ENCODE measurements at regions of chr20 and their contacts with region 1.

Region 1: DNA sequence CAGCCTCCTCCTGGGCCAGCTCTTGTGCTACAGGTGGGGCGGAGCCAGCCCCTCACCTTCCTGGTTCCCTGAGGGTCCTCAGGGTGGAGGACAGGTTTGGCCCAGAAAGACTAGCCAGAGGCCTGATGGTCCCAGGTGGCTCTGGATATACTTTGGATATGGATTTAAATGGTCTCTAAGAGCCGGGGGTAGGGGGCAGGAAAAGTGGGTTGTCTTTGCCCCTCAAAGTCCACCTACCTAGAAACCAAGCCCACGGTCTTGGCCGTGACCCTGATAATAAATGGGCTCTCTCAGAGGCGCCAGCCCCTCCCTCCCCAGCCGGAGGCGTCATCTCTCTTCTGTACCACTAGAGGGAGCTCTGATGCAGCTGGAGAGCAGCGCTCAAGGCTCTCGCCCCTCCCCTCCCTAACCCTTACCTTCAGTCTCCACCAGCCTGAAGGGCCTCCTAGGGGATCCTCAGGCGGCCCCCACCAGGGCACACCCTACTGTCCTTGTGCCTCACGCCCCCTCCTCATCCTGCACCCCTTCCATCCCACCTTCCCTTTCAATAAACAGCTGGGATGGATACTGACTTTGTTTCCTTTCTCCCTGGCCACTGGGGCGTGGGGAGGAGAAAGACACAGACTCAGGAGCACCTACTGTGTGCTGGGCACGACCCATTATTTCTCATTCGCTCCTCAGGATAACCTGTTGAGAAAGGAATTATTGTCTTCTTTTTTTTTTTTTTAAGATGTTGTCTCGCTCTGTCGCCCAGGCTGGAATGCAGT is 7.6 kb downstream of the NRSN2 start:
- DNase-seq: peak; percentile 67
- ATAC-seq: peak; percentile 97
- H3K4me3 ChIP-seq: no peak overlapping the region
- H3K27ac ChIP-seq: no peak overlapping the region
- H3K4me1 ChIP-seq: peaks cover 4% of the 10 kb centered on the region; the same call in 1 of the 2 replicates
- H3K27me3 ChIP-seq: no peaks in the 10 kb centered on the region
- CTCF ChIP-seq: peak; percentile 97
- POLR2A ChIP-seq: peak; percentile 56; the same call in 1 of the 2 replicates
- RAD21 ChIP-seq: peak; percentile 99

Region 2: GRCh38 chr20:478949-479429 is 124.5 kb after region 1 on chr20:
- CTCF ChIA-PET with region 1: interaction called, 4 read pairs
- POLR2A ChIA-PET with region 1: no interaction called
- dilution Hi-C with region 1: no loop called
- in situ Hi-C with region 1: loop called (anchors 5 kb)
- intact Hi-C with region 1: loop called (anchors 1 kb)
- DNase-seq: peak; percentile 77
- ATAC-seq: peak; percentile 69
- H3K4me3 ChIP-seq: no peak overlapping the region
- H3K27ac ChIP-seq: no peak overlapping the region
- H3K4me1 ChIP-seq: peaks cover 10% of the 10 kb centered on the region
- H3K27me3 ChIP-seq: no peaks in the 10 kb centered on the region
- CTCF ChIP-seq: peak; percentile 60
- POLR2A ChIP-seq: no peak
- RAD21 ChIP-seq: peak; percentile 55

Region 3: DNA sequence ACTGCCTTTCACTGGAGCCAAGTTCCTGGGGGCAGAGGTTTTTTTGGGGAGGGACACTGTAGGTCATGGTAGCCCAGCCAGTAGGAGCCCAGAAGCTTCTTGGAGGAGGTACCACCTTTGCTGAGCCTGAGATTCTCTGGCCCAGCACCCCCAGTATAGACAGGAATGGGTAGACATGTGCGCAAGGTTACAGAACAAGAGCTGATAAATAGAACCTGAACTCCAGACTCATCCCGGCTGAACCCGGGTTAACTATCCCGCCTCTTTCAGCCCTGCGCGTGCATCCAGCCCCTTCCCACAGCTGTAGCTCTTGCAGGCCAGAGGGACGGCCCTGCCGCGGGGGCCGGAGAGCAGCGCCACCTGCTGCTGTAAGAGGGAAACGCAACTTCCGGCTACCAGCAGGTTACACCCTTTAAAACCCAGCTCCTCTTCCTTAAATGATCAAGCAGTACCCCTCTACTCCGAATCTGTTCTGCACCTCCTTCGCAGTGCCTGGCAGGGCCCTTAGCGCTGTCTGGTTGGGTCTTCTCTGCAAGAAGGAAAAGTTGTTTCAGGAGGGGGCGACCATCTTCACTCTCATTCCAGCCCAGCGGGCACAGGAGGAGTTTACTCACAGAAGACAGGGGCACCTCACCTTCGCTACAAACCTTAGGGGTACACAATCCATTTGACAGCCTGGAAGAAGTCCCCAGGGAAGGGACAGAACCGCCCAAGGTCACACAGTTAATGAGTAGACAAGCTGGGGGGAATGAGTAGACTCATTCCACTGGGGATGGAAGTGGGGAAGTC is 291.0 kb after region 1 on chr20:
- CTCF ChIA-PET with region 1: interaction called, 4 read pairs
- POLR2A ChIA-PET with region 1: no interaction called
- dilution Hi-C with region 1: no loop called
- in situ Hi-C with region 1: loop called (anchors 10 kb)
- intact Hi-C with region 1: loop called (anchors 1 kb)
- DNase-seq: peak; percentile 57
- ATAC-seq: peak; percentile 87
- H3K4me3 ChIP-seq: no peak overlapping the region
- H3K27ac ChIP-seq: no peak overlapping the region
- H3K4me1 ChIP-seq: no peaks in the 10 kb centered on the region
- H3K27me3 ChIP-seq: no peaks in the 10 kb centered on the region; the same call in 1 of the 2 replicates
- CTCF ChIP-seq: peak; percentile 89
- POLR2A ChIP-seq: no peak
- RAD21 ChIP-seq: peak; percentile 77

Region 4: DNA sequence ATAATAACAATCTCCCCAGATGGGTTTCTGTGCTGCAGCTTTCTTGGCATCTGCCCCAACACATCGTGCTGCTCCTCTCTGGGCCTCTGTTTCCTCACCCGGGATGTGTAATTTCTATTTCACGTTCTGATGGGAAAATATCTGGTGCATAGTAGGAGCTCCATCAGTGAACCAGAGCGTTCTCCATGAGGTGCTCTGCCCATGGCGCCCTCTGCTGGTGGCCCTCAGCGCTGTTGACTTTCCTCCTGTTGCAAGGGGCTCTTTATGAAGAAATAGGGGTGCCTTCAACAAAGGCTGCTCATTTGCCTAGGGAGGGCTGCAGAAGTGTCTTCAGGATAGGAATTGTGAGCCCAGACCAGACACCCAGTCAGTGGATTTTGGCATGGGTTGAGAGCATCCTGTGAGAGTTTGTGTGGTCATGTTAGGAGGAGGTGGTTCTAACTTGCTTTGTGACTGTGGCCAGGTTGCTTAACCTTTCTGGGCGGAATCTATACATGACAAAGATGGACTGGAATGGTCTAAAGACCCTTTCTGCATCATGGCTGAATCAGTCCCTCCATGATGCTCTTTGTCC is 313.0 kb after region 1 on chr20:
- CTCF ChIA-PET with region 1: interaction called, 5 read pairs
- POLR2A ChIA-PET with region 1: no interaction called
- dilution Hi-C with region 1: no loop called
- in situ Hi-C with region 1: no loop called
- intact Hi-C with region 1: loop called (anchors 2 kb)
- DNase-seq: peak; percentile 34
- ATAC-seq: peak; percentile 68
- H3K4me3 ChIP-seq: no peak overlapping the region
- H3K27ac ChIP-seq: no peak overlapping the region
- H3K4me1 ChIP-seq: no peaks in the 10 kb centered on the region
- H3K27me3 ChIP-seq: peaks cover 86% of the 10 kb centered on the region
- CTCF ChIP-seq: peak; percentile 70
- POLR2A ChIP-seq: no peak
- RAD21 ChIP-seq: peak; percentile 56

Region 5: DNA sequence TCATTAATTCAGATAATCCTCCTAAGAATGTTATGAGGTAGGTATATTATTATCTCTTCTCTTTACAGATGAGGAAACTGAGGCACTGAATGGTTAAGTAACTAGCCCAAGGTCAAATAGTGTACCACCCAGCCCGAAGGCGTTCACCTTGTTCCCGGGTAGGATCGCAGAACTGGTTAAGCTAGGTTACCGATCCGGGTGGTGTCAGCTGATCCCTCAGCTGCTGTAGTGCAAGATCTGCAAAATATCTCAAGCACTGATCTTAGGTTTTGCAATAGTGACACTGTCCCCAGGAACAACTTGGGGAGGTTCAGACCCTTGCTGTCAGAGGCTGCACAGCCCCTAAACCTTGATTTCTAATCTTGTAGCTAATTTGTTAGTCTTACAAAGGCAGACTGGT is 385.7 kb after region 1 on chr20:
- CTCF ChIA-PET with region 1: no interaction called
- POLR2A ChIA-PET with region 1: no interaction called
- dilution Hi-C with region 1: no loop called
- in situ Hi-C with region 1: loop called (anchors 10 kb)
- intact Hi-C with region 1: loop called (anchors 2 kb)
- DNase-seq: no peak
- ATAC-seq: no peak
- H3K4me3 ChIP-seq: no peak overlapping the region
- H3K27ac ChIP-seq: no peak overlapping the region
- H3K4me1 ChIP-seq: no peaks in the 10 kb centered on the region
- H3K27me3 ChIP-seq: peaks cover 10% of the 10 kb centered on the region
- CTCF ChIP-seq: no peak
- POLR2A ChIP-seq: no peak
- RAD21 ChIP-seq: no peak

Region 6: DNA sequence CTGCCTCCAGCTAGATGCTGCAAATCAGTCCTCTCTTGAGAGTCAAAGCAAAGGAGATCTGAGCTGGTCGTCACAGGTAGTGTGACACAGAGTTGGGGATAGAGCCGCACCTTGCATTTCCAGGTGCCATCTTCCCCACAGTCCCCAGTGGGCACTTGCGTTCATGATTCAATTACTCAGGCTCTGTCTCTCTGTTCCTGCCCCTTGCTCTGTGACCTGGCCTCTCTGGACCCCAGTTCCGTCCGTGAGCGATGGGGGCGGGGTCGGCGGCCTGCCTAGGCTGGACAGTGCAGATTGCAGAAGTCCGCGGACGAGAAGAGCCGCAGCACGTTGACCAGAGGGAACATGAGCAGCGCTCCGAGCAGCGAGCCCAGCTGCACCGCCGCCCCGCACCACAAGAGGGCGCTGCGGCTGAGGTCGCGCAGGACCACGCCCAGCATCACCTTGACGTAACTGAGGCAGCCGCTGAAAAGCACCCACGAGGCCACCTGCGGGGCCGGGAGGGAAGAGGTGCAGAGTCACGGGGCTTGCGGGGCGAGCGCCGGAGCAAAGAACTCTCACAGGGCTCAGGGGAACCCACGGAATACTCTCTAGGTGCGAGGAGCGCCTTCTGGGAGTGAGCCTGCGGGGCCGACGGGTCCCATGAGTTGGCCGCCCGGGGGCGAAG is 406.4 kb after region 1 on chr20:
- CTCF ChIA-PET with region 1: no interaction called
- POLR2A ChIA-PET with region 1: no interaction called
- dilution Hi-C with region 1: no loop called
- in situ Hi-C with region 1: no loop called
- intact Hi-C with region 1: no loop called
- DNase-seq: no peak
- ATAC-seq: peak; percentile 62
- H3K4me3 ChIP-seq: no peak overlapping the region
- H3K27ac ChIP-seq: no peak overlapping the region
- H3K4me1 ChIP-seq: no peaks in the 10 kb centered on the region
- H3K27me3 ChIP-seq: peaks cover 9% of the 10 kb centered on the region
- CTCF ChIP-seq: peak; percentile 44
- POLR2A ChIP-seq: no peak
- RAD21 ChIP-seq: no peak